ENCODE measurements at regions of chr5 and their contacts with region 1.

Region 1: DNA sequence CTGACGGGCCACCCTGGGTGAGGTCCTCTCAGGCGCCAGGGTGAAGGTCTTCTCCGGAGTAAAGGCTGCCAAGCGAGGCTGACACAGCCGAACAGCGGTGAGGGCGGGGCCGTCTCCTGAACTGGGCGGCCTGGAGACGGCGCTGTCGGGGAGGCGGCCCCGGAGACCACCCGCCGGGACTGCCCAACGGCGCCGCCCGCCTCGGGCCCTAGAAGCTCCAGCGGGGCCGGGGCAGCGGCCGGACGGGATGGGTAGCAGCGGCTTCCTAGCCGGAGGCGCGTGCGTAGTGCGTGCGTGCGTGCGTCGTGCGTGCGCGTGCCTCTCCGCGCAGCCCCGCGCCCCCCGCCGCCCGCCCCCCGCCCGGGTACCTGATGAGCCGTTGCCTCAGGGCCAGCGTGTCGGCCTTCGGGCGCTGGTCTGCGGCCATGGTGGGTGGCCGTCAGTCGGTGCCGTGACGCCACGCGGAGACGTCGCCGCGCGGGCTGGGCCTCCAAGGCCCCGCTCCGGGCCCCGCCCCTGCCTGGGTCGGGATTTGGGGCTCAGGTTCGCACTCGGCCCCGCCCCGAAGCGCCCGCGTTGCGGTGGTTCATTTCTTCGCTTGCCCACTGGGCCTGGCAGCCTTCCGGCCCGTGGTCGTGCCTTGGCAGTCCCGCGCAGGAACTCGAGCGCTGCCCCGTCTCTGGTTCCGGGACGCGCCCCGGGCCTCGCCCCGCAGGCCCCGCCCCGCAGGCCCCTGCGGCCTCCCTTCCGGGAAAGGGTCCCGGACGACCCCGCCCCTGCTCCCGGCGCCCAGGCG is at the start of gene PHYKPL:
- DNase-seq: peak in 1 of 2 experiments; percentile 83
- H3K4me3 ChIP-seq: peak within 1 kb of the TSS; percentile 52 to 72 (median 64)
- H3K27ac ChIP-seq: peak within 1 kb of the TSS; percentile 31; the same call in 1 of the 2 replicates
- H3K4me1 ChIP-seq: peaks cover 0 to 17% (median 10%) of the 10 kb centered on the region in 4 experiments; a peak in 6 of 7 replicates
- H3K27me3 ChIP-seq: no peaks in the 10 kb centered on the region
- CTCF ChIP-seq: peak in 2 of 3 experiments; percentile 11 to 17; a peak in 1 of 4 replicates
- EP300 ChIP-seq: no peak
- POLR2A ChIP-seq: peak in 1 of 2 experiments; percentile 72; a peak in 2 of 3 replicates
- RAD21 ChIP-seq: no peak; a peak in 1 of 4 replicates
- total RNA-seq, gene PHYKPL: 29.5 and 32.1 TPM in 2 replicates

Region 2: GRCh38 chr5:178204182-178204894 is 28.0 kb before region 1 on chr5 and contains the start of gene HNRNPAB:
- CTCF ChIA-PET with region 1: no interaction called
- POLR2A ChIA-PET with region 1: interaction called, 507 read pairs
- DNase-seq: peak; percentile 85 to 97
- H3K4me3 ChIP-seq: peak within 1 kb of the TSS; percentile 93 to 100 (median 100)
- H3K27ac ChIP-seq: peak within 1 kb of the TSS; percentile 95
- H3K4me1 ChIP-seq: peaks cover 0 to 10% (median 4%) of the 10 kb centered on the region in 4 experiments; a peak in 5 of 7 replicates
- H3K27me3 ChIP-seq: no peaks in the 10 kb centered on the region
- CTCF ChIP-seq: no peak
- EP300 ChIP-seq: 0 out of 3 replicates have a peak, but pooled peaks of 1 of the 2 experiments have one; percentile 8
- POLR2A ChIP-seq: peak; percentile 99 to 100
- RAD21 ChIP-seq: no peak
- total RNA-seq, gene HNRNPAB: 556 and 563 TPM in 2 replicates

Region 3: GRCh38 chr5:178250263-178250662 is 17.9 kb after region 1 on chr5:
- CTCF ChIA-PET with region 1: interaction called, 20 read pairs
- POLR2A ChIA-PET with region 1: interaction called, 8 read pairs
- DNase-seq: no peak
- H3K4me3 ChIP-seq: no peak overlapping the region
- H3K27ac ChIP-seq: no peak overlapping the region
- H3K4me1 ChIP-seq: peaks cover 0 to 5% (median under 1%) of the 10 kb centered on the region in 4 experiments; a peak in 4 of 7 replicates
- H3K27me3 ChIP-seq: no peaks in the 10 kb centered on the region; a peak in 2 of 7 replicates
- CTCF ChIP-seq: no peak
- EP300 ChIP-seq: no peak
- POLR2A ChIP-seq: no peak
- RAD21 ChIP-seq: no peak

Region 4: GRCh38 chr5:178304761-178305645 is 72.7 kb after region 1 on chr5:
- CTCF ChIA-PET with region 1: no interaction called
- POLR2A ChIA-PET with region 1: no interaction called
- DNase-seq: no peak
- H3K4me3 ChIP-seq: no peak overlapping the region
- H3K27ac ChIP-seq: no peak overlapping the region
- H3K4me1 ChIP-seq: peaks cover 0 to 9% (median 1%) of the 10 kb centered on the region in 4 experiments; a peak in 2 of 7 replicates
- H3K27me3 ChIP-seq: no peaks in the 10 kb centered on the region
- CTCF ChIP-seq: no peak
- EP300 ChIP-seq: no peak
- POLR2A ChIP-seq: no peak
- RAD21 ChIP-seq: no peak

Measured in H1 (cell line).